B cell (primary cell): ENCODE measurements at regions of chr10 and their contacts with region 1.

Region 1: DNA sequence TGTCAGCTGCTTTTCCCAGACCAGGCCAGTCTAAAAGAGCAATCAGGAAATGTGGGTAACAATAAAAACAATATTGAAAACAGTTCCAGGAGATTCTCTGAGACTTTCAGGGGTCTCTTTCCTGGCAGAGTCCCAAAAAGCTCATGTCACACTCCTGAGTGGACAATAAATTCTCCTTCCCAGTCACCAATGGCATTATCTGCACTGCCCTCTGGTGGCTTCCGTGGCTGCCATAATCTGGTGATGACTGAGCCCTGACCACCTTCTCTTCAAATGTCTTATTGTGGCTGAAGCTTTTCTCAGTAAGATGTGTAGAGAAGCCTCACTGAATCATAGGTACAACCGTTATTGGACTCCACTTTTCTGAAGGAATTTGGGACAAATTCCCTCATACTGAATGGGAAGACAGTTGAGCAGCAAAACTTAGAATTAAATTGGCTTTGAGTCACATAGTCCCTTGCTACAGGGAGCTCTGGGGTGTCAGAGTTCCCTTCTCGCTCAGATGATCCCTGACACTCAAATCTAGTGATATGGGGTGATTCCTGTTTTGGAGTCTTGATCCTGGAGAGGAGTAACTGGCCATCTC is 24.4 kb upstream of the ASAH2 start:
- DNase-seq: peak; percentile 58
- ATAC-seq: peak; percentile 39
- H3K4me3 ChIP-seq: no peak overlapping the region
- H3K4me3 Mint-ChIP-seq: no peak overlapping the region
- H3K27ac ChIP-seq: no peak overlapping the region
- H3K27ac Mint-ChIP-seq: no peak overlapping the region
- H3K4me1 ChIP-seq: no peaks in the 10 kb centered on the region
- H3K4me1 Mint-ChIP-seq: no peaks in the 10 kb centered on the region
- H3K27me3 ChIP-seq: peaks cover 0 to 12% (median 7%) of the 10 kb centered on the region in 4 experiments
- H3K27me3 Mint-ChIP-seq: peaks cover 32% of the 10 kb centered on the region
- CTCF ChIP-seq: peak; percentile 71

Region 2: GRCh38 chr10:49592726-49593563 is 682.8 kb before region 1 on chr10:
- CTCF ChIA-PET with region 1: interaction called, 14 read pairs
- POLR2A ChIA-PET with region 1: no interaction called
- intact Hi-C with region 1: no loop called
- DNase-seq: peak; percentile 67
- ATAC-seq: peak; percentile 79
- H3K4me3 ChIP-seq: no peak overlapping the region
- H3K4me3 Mint-ChIP-seq: no peak overlapping the region
- H3K27ac ChIP-seq: no peak overlapping the region
- H3K27ac Mint-ChIP-seq: no peak overlapping the region
- H3K4me1 ChIP-seq: peaks cover 0 to 2% of the 10 kb centered on the region in 2 donors
- H3K4me1 Mint-ChIP-seq: peaks cover 3% of the 10 kb centered on the region
- H3K27me3 ChIP-seq: peaks cover 0 to 8% (median 1%) of the 10 kb centered on the region in 4 experiments
- H3K27me3 Mint-ChIP-seq: peaks cover 25% of the 10 kb centered on the region
- CTCF ChIP-seq: peak; percentile 92

Region 3: GRCh38 chr10:50260791-50261281 is 14.9 kb before region 1 on chr10:
- CTCF ChIA-PET with region 1: interaction called, 21 read pairs
- POLR2A ChIA-PET with region 1: no interaction called
- intact Hi-C with region 1: no loop called
- DNase-seq: peak; percentile 72
- ATAC-seq: peak; percentile 97
- H3K4me3 ChIP-seq: peak overlapping the region in 1 of 5 experiments; percentile 34
- H3K4me3 Mint-ChIP-seq: peak overlapping the region; percentile 72
- H3K27ac ChIP-seq: peak overlapping the region in 1 of 2 donors; percentile 48
- H3K27ac Mint-ChIP-seq: peak overlapping the region; percentile 21
- H3K4me1 ChIP-seq: peaks cover 21 to 27% of the 10 kb centered on the region in 2 donors
- H3K4me1 Mint-ChIP-seq: peaks cover 34% of the 10 kb centered on the region
- H3K27me3 ChIP-seq: peaks cover 0 to 6% (median 5%) of the 10 kb centered on the region in 4 experiments
- H3K27me3 Mint-ChIP-seq: peaks cover 31% of the 10 kb centered on the region
- CTCF ChIP-seq: no peak

Region 4: DNA sequence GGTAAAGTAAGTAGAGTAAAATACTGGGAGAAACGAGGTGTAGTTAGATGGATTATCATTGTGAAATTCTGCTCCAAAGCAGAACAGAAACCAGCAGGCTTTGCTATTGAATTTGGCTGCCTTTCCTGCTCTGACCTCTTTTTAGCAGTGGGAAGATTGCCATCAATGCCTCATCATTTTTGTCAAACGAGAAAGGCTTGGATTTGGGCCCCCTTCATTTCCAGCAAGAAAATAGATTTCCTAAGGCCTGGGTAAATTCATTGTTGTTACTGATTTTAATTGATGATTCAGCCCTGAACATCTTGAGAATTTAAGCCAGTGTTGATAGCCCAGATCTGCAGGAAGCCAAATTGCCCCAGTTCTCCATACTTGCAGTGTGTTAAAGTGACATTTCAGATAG is 10.8 kb after region 1 on chr10:
- CTCF ChIA-PET with region 1: interaction called, 11 read pairs
- POLR2A ChIA-PET with region 1: no interaction called
- intact Hi-C with region 1: no loop called
- DNase-seq: no peak
- ATAC-seq: no peak
- H3K4me3 ChIP-seq: no peak overlapping the region
- H3K4me3 Mint-ChIP-seq: no peak overlapping the region
- H3K27ac ChIP-seq: no peak overlapping the region
- H3K27ac Mint-ChIP-seq: no peak overlapping the region
- H3K4me1 ChIP-seq: no peaks in the 10 kb centered on the region
- H3K4me1 Mint-ChIP-seq: no peaks in the 10 kb centered on the region
- H3K27me3 ChIP-seq: peaks cover 0 to 8% (median 3%) of the 10 kb centered on the region in 4 experiments
- H3K27me3 Mint-ChIP-seq: peaks cover 23% of the 10 kb centered on the region
- CTCF ChIP-seq: no peak

Region 5: DNA sequence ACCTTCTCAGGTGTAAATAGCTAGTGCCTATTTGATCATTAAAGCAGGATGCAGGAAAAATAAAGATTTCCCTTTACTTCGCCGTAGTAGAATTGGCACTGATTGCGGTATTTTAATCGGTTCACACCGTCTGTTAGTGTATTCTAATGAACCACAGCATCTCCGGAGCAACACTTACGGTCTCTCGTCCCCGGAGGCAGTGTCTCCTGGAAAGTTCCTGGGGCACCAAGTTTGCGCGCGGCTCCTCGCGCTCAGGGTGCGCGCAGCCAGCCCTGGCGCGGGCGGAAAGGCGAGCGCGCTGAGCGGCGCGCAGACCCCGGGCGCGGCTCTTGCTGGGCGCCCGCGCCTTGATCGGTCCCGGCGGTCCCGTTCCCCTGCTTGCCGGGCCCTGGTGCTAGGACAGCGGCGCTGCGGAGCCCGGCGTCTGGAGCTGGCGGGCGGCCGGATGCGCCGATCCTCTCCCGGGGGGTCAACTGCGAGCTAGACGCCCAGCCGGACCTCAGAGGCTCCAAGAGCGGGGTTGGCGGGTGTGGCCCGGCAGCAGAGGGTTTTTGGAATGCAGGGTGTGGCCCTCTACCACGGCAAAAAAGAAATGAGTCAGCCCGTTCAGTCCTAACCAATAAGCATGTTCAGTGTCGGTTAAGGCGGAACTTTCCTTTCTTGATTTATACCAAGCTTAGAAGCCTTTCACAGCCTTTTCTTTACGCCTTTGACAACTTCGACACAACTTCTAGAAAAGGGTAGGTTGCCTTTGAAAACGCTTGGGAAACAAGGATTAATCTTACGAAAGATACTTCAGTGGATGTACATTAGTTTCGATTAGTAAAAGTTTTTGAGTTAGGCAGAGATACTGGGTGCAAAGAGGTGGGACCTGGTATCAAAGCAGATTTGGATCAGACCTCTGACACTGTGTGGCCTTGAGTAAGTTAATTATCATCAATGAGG is 142.4 kb after region 1 on chr10:
- CTCF ChIA-PET with region 1: interaction called, 14 read pairs
- POLR2A ChIA-PET with region 1: no interaction called
- intact Hi-C with region 1: loop called (anchors 5 kb)
- DNase-seq: peak; percentile 55
- ATAC-seq: peak; percentile 77
- H3K4me3 ChIP-seq: peak overlapping the region; percentile 55 to 78 (median 71)
- H3K4me3 Mint-ChIP-seq: peak overlapping the region; percentile 93
- H3K27ac ChIP-seq: peak overlapping the region in 1 of 2 donors; percentile 8
- H3K27ac Mint-ChIP-seq: peak overlapping the region; percentile 79
- H3K4me1 ChIP-seq: peaks cover 17 to 26% of the 10 kb centered on the region in 2 donors
- H3K4me1 Mint-ChIP-seq: peaks cover 57% of the 10 kb centered on the region
- H3K27me3 ChIP-seq: no peaks in the 10 kb centered on the region
- H3K27me3 Mint-ChIP-seq: no peaks in the 10 kb centered on the region
- CTCF ChIP-seq: no peak

Region 6: GRCh38 chr10:50470345-50470744 is 194.6 kb after region 1 on chr10:
- CTCF ChIA-PET with region 1: no interaction called
- POLR2A ChIA-PET with region 1: no interaction called
- intact Hi-C with region 1: no loop called
- DNase-seq: no peak
- ATAC-seq: no peak
- H3K4me3 ChIP-seq: no peak overlapping the region
- H3K4me3 Mint-ChIP-seq: no peak overlapping the region
- H3K27ac ChIP-seq: no peak overlapping the region
- H3K27ac Mint-ChIP-seq: no peak overlapping the region
- H3K4me1 ChIP-seq: peaks cover 21% of the 10 kb centered on the region in 2 donors
- H3K4me1 Mint-ChIP-seq: peaks cover 53% of the 10 kb centered on the region
- H3K27me3 ChIP-seq: no peaks in the 10 kb centered on the region
- H3K27me3 Mint-ChIP-seq: no peaks in the 10 kb centered on the region
- CTCF ChIP-seq: no peak

Region 7: GRCh38 chr10:50561816-50562215 is 286.1 kb after region 1 on chr10:
- CTCF ChIA-PET with region 1: no interaction called
- POLR2A ChIA-PET with region 1: no interaction called
- intact Hi-C with region 1: no loop called
- DNase-seq: peak; percentile 24
- ATAC-seq: peak; percentile 31
- H3K4me3 ChIP-seq: no peak overlapping the region
- H3K4me3 Mint-ChIP-seq: no peak overlapping the region
- H3K27ac ChIP-seq: no peak overlapping the region
- H3K27ac Mint-ChIP-seq: no peak overlapping the region
- H3K4me1 ChIP-seq: no peaks in the 10 kb centered on the region
- H3K4me1 Mint-ChIP-seq: peaks cover 19% of the 10 kb centered on the region
- H3K27me3 ChIP-seq: no peaks in the 10 kb centered on the region
- H3K27me3 Mint-ChIP-seq: no peaks in the 10 kb centered on the region
- CTCF ChIP-seq: peak; percentile 43